Vagina (tissue), 2 donors: ENCODE measurements at regions of chr3 and their contacts with region 1.

Region 1: DNA sequence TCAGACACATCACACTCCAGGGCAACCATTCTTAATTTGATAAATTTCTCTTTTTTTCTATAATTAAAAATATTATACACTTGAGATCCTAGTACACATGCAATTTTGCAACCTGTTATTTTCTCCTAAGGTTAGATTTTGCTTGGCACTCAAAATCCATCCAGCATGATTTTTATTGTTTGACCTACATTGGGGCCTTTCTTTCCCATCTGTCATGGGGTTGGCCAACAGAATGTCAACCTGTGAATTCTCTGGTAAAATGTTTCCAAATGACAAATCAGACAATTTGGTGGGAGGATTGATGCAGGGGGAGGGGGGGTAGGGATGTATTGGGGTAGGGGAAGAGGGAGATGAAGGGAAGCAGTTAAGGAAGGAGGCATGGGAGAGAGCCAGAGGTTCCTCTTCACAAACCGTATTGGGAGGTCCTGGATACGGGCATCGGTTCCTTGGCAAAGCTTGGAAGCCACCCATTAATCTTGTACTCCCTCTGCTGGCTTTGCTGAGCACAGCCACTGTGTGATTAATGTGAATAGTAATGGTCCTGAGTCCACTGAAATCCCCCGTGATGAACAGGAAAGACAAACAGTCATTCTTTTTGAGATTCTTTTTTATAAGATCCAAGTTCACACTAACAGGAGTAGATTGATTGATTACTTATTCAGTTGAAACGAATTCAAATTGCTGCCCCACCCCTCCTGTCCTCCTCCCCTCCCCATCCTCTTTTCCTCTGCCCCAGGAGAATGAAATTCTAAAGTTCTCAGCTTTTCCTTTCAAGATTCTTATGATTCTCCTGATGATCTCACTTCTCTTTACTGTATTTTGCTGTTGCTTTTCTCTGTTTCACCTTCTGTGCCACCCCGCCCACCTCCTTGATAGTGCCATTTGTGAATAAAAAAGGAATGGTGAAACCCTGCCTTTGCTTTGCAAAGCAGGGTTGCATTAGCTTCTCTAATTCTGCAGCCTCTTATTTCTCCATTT is 82.2 kb upstream of the SLC25A26 start:
- DNase-seq: no peak
- H3K4me3 ChIP-seq: no peak overlapping the region
- H3K27ac ChIP-seq: no peak overlapping the region
- H3K4me1 ChIP-seq: no peaks in the 10 kb centered on the region
- H3K27me3 ChIP-seq: no peaks in the 10 kb centered on the region
- CTCF ChIP-seq: peak; percentile 13 to 72 (median 53)
- POLR2A ChIP-seq: no peak

Region 2: GRCh38 chr3:65785065-65785645 is 353.5 kb before region 1 on chr3:
- intact Hi-C with region 1: loop called (anchors 5 kb)
- DNase-seq: no peak
- H3K4me3 ChIP-seq: no peak overlapping the region
- H3K27ac ChIP-seq: no peak overlapping the region
- H3K4me1 ChIP-seq: no peaks in the 10 kb centered on the region
- H3K27me3 ChIP-seq: no peaks in the 10 kb centered on the region
- CTCF ChIP-seq: peak in 2 of 3 experiments; percentile 51 to 57
- POLR2A ChIP-seq: no peak

Region 3: DNA sequence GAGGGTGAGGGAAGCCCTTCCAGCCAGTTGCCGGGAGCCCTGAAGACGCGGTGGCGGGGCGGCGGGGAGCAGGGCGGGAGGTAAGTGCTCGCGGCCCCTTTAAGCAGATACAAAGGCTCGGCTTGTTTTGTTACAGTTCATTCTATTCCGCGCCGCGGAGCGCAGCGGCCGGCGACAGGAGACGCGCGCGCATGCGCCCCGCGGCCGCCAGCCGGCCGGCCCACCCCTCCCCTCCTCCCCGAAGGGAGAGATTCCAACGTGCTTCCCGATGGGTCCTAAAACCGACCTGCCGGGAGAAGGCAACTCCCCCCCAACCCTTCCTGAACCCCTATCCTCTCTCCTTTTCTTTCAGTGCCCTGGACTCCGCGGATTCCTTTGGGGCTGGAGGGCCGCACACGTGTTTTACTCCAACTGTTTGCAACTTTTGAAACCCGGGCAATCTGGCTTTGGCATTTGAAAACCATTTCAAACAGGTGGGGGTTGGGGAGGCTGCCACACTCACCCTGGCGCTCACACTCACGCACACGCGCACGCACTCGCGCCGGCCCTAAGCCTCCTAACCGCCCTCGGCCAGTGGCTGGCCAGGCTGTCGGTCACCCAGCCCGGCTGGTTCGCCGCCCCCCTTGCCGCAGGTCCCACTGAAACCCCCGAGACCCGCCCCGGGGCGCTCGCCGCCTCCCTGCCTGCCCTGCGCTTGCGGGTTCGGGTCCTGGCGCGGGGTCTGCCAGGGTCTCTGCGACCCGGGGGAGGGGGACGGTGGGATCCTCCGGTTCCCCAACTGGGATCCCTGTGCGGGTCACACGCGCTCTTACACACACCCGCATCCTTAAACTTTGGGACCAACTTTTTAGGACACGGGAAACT is 99.7 kb before region 1 on chr3 and contains the start of gene MAGI1:
- intact Hi-C with region 1: loop called (anchors 5 kb)
- DNase-seq: peak in 1 of 2 donors; percentile 91
- H3K4me3 ChIP-seq: peak within 1 kb of the TSS; percentile 45 to 76
- H3K27ac ChIP-seq: peak within 1 kb of the TSS; percentile 82
- H3K4me1 ChIP-seq: peaks cover 29% of the 10 kb centered on the region
- H3K27me3 ChIP-seq: no peaks in the 10 kb centered on the region
- CTCF ChIP-seq: no peak
- POLR2A ChIP-seq: peak in 1 of 2 donors; percentile 41
- total RNA-seq, gene MAGI1: 47.1 TPM